Gastrocnemius medialis (tissue), 4 donors: ENCODE measurements at regions of chrX and their contacts with region 1.

Region 1: GRCh38 chrX:136780763-136781162 is at the start of gene ARHGEF6:
- DNase-seq: peak in 1 of 2 donors; percentile 17
- ATAC-seq: peak; percentile 66 to 74
- H3K4me3 ChIP-seq: peak within 1 kb of the TSS; percentile 36 to 67 (median 46)
- H3K27ac ChIP-seq: peak within 1 kb of the TSS; percentile 66 to 84 (median 78)
- H3K4me1 ChIP-seq: peaks cover 0 to 15% of the 10 kb centered on the region in 2 donors
- H3K27me3 ChIP-seq: no peaks in the 10 kb centered on the region
- CTCF ChIP-seq: no peak
- POLR2A ChIP-seq: no peak
- total RNA-seq, gene ARHGEF6: 15.0 to 29.9 (median 24.5) TPM

Region 2: GRCh38 chrX:136816970-136817369 is 36.2 kb after region 1 on chrX:
- in situ Hi-C with region 1: no loop called
- intact Hi-C with region 1: no loop called
- DNase-seq: no peak
- ATAC-seq: no peak
- H3K4me3 ChIP-seq: no peak overlapping the region
- H3K27ac ChIP-seq: no peak overlapping the region
- H3K4me1 ChIP-seq: no peaks in the 10 kb centered on the region
- H3K27me3 ChIP-seq: no peaks in the 10 kb centered on the region
- CTCF ChIP-seq: no peak
- POLR2A ChIP-seq: no peak

Region 3: DNA sequence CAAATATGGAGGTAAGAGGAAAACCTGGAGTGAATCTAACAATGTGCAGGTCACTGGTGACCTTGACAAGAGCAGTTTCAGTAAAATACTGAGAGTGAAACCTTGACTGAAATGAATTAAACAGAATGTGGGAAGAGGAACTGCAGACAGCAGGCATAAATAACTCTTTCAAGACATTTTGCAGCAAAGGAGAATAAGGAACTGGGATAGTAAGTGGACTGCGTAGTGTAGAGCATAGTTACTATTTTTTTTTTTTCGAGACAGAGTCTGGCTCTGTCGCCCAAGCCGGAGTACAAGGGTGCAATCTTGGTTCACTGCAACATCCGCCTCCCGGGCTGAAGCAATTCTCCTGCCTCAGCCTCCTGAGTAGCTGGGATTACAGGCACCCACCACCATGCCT is 75.8 kb after region 1 on chrX:
- in situ Hi-C with region 1: no loop called
- intact Hi-C with region 1: loop called (anchors 10 kb)
- DNase-seq: no peak
- ATAC-seq: no peak
- H3K4me3 ChIP-seq: no peak overlapping the region
- H3K27ac ChIP-seq: peak overlapping the region in 1 of 4 donors; percentile 13
- H3K4me1 ChIP-seq: no peaks in the 10 kb centered on the region
- H3K27me3 ChIP-seq: no peaks in the 10 kb centered on the region
- CTCF ChIP-seq: no peak
- POLR2A ChIP-seq: no peak